Activated naive CD4-positive, alpha-beta T cell treated with anti-CD3 and anti-CD28 coated beads for 36 hours (primary cell): ENCODE measurements at regions of chr15 and their contacts with region 1.

Region 1: DNA sequence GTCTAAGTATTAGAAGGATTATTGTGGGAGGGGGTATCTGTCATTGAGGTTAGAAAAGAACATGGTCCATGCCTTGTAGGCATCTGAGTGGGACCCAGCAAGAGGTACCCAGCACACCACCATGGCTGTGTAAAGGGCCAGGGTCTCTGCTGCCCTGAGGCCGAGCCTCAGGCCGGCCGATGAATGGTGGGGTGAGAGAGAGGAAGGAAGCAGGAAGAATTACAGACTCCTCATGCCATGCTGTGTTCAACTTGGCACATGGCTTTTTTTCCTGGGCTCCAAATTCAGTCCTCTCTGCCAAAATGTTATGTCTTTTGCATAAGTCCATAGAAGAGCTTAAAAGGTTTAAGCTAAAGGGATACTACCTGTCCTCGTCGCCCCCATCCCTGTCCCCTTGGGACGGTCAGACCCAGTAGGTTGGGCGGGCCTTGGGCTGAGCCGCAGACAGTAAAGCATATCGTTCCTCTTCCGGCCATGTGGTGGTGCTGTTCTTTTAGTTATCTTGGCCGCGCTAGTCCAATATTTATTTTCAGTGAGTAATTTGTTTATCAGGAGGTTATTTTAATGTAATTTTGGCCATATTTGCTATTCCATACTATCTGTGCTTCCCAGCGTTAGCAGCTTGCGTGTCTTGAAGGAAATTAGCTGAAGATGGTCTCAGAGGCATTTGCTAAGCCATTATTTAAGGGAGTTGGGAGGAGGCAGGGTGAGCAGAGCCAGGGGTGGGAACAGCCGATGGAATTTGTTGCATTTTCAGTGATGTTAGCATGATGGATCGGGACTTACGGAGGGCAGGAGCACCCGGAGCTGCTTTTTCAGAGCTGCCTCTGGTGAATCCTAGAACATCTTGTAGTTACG is 152.4 kb downstream of the AGBL1 start:
- DNase-seq: peak; percentile 49
- H3K4me3 Mint-ChIP-seq: no peak overlapping the region
- H3K27ac Mint-ChIP-seq: no peak overlapping the region
- H3K4me1 Mint-ChIP-seq: peaks cover 4% of the 10 kb centered on the region
- H3K27me3 Mint-ChIP-seq: peaks cover 30% of the 10 kb centered on the region

Region 2: GRCh38 chr15:85858586-85859375 is 373.3 kb before region 1 on chr15:
- CTCF ChIA-PET with region 1: interaction called, 4 read pairs
- intact Hi-C with region 1: loop called (anchors 5 kb)
- DNase-seq: peak; percentile 87
- H3K4me3 Mint-ChIP-seq: peak overlapping the region; percentile 67
- H3K27ac Mint-ChIP-seq: no peak overlapping the region
- H3K4me1 Mint-ChIP-seq: peaks cover 2% of the 10 kb centered on the region
- H3K27me3 Mint-ChIP-seq: peaks cover 13% of the 10 kb centered on the region